AG04450 (cell line): ENCODE measurements at regions of chr9 and their contacts with region 1.

Region 1: GRCh38 chr9:128244837-128245231 is 31.0 kb downstream of the GOLGA2 start:
- DNase-seq: peak; percentile 83
- H3K4me3 ChIP-seq: peak overlapping the region; percentile 72
- H3K27ac ChIP-seq: peak overlapping the region; percentile 89
- H3K27me3 ChIP-seq: no peaks in the 10 kb centered on the region
- CTCF ChIP-seq: no peak

Region 2: GRCh38 chr9:127698985-127699670 is 545.7 kb before region 1 on chr9:
- CTCF ChIA-PET with region 1: no interaction called
- POLR2A ChIA-PET with region 1: no interaction called
- DNase-seq: peak; percentile 92
- H3K4me3 ChIP-seq: peak overlapping the region; percentile 46
- H3K27ac ChIP-seq: peak overlapping the region; percentile 77
- H3K27me3 ChIP-seq: no peaks in the 10 kb centered on the region
- CTCF ChIP-seq: 0 out of 2 replicates have a peak, but pooled peaks have one; percentile 7

Region 3: DNA sequence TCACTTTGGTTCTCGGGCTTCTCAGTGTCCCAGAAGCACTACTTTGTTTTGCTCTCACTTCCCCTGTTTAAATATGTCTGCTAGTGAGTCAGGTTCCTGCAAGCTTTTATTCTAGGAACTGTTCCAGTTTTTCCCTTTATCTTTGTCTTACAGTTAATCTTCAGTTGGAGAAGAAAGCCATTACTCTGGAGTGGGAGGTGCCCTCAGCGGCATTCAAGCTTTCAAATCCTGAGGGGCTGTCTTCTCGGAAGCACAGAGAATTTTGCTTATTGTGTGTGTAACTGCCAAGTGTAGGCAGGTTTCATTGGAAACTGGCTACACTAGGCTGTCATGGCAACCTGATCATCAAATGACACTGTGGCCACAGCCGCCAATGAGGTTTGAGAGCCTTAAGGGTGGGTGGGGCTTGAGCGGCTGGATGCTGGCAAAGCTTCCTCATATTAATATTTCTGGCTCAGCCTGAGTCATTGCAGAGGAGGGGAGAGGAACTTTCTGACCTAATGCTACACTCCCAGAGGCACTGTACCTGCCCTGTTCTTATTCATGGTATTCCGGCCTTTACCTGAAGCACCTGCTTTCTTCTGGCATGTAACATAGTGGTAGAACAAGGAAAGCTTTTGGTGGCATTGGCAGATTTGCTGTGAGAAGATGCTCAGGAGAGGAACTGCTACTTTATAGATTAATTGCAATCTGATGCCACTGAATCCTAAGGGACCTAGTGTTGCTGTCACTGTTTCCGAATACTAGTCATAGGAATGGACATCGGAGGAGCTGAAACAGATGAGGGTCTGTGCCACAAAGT is 150.5 kb before region 1 on chr9:
- CTCF ChIA-PET with region 1: no interaction called
- POLR2A ChIA-PET with region 1: no interaction called
- DNase-seq: peak; percentile 89
- H3K4me3 ChIP-seq: peak overlapping the region; percentile 42
- H3K27ac ChIP-seq: peak overlapping the region; percentile 84
- H3K27me3 ChIP-seq: no peaks in the 10 kb centered on the region
- CTCF ChIP-seq: no peak

Region 4: DNA sequence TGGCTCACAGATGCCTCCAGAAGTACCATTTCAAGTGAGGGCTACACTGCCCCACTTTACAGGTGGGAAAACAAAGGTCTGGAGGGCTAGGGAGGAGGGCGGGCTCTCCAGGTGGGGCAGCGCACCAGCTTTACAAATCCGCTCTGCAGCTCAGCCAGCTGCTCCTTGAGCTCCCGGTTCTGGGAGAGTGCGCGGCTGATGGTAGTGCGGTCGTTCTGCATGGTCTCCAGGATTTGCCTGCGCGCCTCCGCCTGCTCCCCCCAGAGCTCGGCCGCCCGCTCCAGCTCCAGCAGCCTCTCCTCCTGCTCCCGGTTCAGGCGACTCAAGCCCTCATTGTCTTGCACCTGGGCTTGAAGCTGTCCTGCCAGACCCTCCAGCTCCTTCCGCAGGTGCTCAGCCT is 15.5 kb after region 1 on chr9:
- CTCF ChIA-PET with region 1: interaction called, 9 read pairs
- POLR2A ChIA-PET with region 1: interaction called, 11 read pairs
- DNase-seq: no peak
- H3K4me3 ChIP-seq: no peak overlapping the region
- H3K27ac ChIP-seq: no peak overlapping the region
- H3K27me3 ChIP-seq: no peaks in the 10 kb centered on the region
- CTCF ChIP-seq: no peak

Region 5: GRCh38 chr9:128275996-128276573 is 31.3 kb after region 1 on chr9 and contains the starts of genes GOLGA2 and SWI5:
- CTCF ChIA-PET with region 1: no interaction called
- POLR2A ChIA-PET with region 1: interaction called, 12 read pairs
- DNase-seq: peak; percentile 99
- H3K4me3 ChIP-seq: peak within 1 kb of the TSS; percentile 90
- H3K27ac ChIP-seq: peak within 1 kb of the TSS; percentile 87
- H3K27me3 ChIP-seq: no peaks in the 10 kb centered on the region
- CTCF ChIP-seq: no peak
- polyA plus RNA-seq, gene GOLGA2: 112 and 121 TPM in 2 replicates
- polyA plus RNA-seq, gene SWI5: 72.2 and 75.8 TPM in 2 replicates

Region 6: GRCh38 chr9:128431207-128431606 is 186.4 kb after region 1 on chr9:
- CTCF ChIA-PET with region 1: no interaction called
- POLR2A ChIA-PET with region 1: no interaction called
- DNase-seq: no peak
- H3K4me3 ChIP-seq: no peak overlapping the region
- H3K27ac ChIP-seq: no peak overlapping the region
- H3K27me3 ChIP-seq: no peaks in the 10 kb centered on the region
- CTCF ChIP-seq: no peak